ENCODE measurements at regions of chr3 and their contacts with region 1.

Region 1: GRCh38 chr3:149936812-149937233 is 33.9 kb downstream of the PFN2 start:
- DNase-seq: peak; percentile 50
- H3K4me3 Mint-ChIP-seq: no peak overlapping the region
- H3K27ac Mint-ChIP-seq: no peak overlapping the region
- H3K4me1 Mint-ChIP-seq: peaks cover 19% of the 10 kb centered on the region
- H3K27me3 Mint-ChIP-seq: no peaks in the 10 kb centered on the region

Region 2: GRCh38 chr3:150183678-150184425 is 247.0 kb after region 1 on chr3:
- CTCF ChIA-PET with region 1: interaction called, 52 read pairs
- POLR2A ChIA-PET with region 1: interaction called, 3 read pairs
- intact Hi-C with region 1: loop called (anchors 1 kb)
- DNase-seq: peak; percentile 64
- H3K4me3 Mint-ChIP-seq: no peak overlapping the region
- H3K27ac Mint-ChIP-seq: no peak overlapping the region
- H3K4me1 Mint-ChIP-seq: no peaks in the 10 kb centered on the region
- H3K27me3 Mint-ChIP-seq: peaks cover 3% of the 10 kb centered on the region

Region 3: DNA sequence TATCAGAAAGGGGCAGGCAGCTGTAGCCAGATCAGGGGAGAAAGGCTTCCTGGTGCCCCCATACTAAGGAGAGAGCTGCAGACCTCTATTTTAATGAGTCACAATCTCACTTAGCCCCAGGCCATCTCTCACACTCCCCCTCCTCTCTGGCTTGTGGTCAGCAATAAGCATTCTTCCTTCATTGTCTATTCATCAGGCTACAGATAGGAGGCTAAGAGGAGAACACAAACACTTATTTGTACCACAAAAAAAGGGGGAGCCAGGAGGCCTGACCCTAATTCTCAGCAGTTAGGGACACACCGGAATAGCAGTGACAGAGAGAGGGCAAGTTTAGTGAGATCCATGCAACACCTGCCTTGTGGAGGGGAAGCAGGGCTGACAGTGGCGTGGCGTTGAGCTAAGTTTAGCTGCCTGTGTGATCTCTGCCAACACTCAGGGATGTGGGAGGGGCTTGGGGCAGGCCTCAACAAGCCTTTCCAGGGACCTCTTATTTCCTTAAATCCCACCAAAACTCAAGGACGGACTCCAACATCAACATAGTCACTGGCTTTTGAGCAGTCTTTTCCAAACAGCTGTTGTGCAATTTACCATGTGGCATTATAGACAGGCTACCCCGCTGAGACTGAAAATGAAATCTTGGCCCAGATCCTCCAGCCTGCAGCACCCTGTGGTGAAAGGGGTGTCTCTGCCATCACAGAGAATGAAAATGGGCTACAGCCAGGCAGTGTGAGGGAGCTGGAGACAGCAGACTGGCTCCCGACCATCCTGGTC is 279.4 kb after region 1 on chr3:
- CTCF ChIA-PET with region 1: interaction called, 11 read pairs
- POLR2A ChIA-PET with region 1: no interaction called
- intact Hi-C with region 1: no loop called
- DNase-seq: no peak
- H3K4me3 Mint-ChIP-seq: no peak overlapping the region
- H3K27ac Mint-ChIP-seq: no peak overlapping the region
- H3K4me1 Mint-ChIP-seq: peaks cover 1% of the 10 kb centered on the region
- H3K27me3 Mint-ChIP-seq: peaks cover 23% of the 10 kb centered on the region